K562 (cell line): ENCODE measurements at regions of chr2 and their contacts with region 1.

Region 1: DNA sequence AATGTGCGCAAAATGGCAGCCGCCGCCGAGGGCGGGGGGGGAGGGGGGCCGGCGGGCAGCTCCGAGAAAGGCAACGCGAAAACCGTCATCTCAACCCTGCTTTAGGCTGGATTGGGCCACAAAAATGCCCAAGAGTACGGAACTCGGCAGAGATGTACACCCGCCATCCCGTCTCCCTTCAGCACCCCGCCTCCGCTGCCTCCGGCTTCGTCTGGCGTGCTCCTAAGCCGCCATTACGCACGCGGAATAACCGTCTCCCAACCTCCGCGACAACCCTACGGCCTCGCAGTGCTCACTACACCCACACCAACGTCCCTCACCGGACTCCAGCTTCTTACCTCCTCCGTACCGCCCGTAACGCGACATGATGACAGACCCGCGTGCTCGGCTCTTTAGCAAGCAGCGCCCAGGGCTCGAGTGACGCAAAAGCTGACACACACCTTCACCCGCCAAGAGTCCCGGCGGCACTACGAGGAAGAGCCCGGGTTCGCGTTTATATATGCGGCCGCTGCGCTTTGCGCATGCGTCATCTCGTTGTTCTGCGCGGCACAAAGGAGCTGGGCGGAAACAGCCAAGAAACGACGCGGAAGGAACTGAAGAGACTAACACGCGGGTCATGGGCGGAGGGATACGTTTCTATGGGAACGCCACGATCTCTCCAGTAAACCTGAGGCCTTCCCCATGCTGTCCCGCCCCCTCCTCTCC is at the start of gene SRSF7:
- DNase-seq: peak; percentile 91 to 99 (median 95)
- ATAC-seq: peak; percentile 86
- H3K4me3 ChIP-seq: peak within 1 kb of the TSS; percentile 82
- H3K27ac ChIP-seq: peak within 1 kb of the TSS; percentile 99
- H3K4me1 ChIP-seq: peaks cover 0 to 29% of the 10 kb centered on the region in 2 experiments; a peak in 3 of 5 replicates
- H3K27me3 ChIP-seq: no peaks in the 10 kb centered on the region
- CTCF ChIP-seq: no peak
- EP300 ChIP-seq: peak; percentile 25
- POLR2A ChIP-seq: peak; percentile 100
- RAD21 ChIP-seq: peak in 1 of 2 experiments; percentile 16; a peak in 2 of 4 replicates
- polyA plus RNA-seq, gene SRSF7: 696 to 706 TPM

Region 2: GRCh38 chr2:37417321-37417720 is 1333.7 kb before region 1 on chr2:
- CTCF ChIA-PET with region 1: no interaction called
- POLR2A ChIA-PET with region 1: no interaction called
- in situ Hi-C with region 1: no loop called
- intact Hi-C with region 1: no loop called
- DNase-seq: no peak
- ATAC-seq: no peak
- H3K4me3 ChIP-seq: no peak overlapping the region
- H3K27ac ChIP-seq: no peak overlapping the region
- H3K4me1 ChIP-seq: peaks cover 3 to 15% of the 10 kb centered on the region in 2 experiments; a peak in 2 of 5 replicates
- H3K27me3 ChIP-seq: no peaks in the 10 kb centered on the region; a peak in 1 of 5 replicates
- CTCF ChIP-seq: no peak
- EP300 ChIP-seq: no peak
- POLR2A ChIP-seq: no peak
- RAD21 ChIP-seq: no peak

Region 3: DNA sequence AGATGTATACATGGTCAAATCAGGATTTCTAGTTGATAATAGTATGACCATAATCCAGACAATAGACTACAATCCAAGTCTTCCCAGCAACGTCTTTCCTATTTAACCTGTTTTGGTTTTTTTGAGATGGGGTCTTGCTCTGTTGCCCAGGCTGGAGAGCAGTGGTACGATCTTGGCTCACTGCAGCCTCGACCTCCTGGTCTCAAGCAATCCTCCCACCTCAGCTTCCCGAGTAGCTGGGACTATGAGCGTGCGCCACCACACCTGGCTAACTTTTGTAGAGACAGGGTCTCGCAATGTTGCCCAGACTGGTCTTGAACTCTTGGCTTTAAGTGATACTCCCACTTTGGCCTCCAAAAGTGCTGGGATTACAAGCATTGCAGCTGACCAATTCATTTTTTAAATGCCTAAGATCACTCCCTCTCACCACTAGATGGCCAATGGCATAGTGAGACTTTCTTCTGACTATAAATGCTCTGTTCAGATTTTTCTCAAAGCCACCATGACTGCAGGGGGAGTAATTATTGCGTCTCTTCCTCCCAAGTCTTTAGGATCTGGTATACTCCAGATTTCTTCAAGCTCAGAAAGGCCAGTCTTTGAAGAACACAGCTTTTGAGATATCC is 196.0 kb before region 1 on chr2:
- CTCF ChIA-PET with region 1: no interaction called
- POLR2A ChIA-PET with region 1: interaction called, 12 read pairs
- in situ Hi-C with region 1: no loop called
- intact Hi-C with region 1: no loop called
- DNase-seq: peak; percentile 22 to 47 (median 31)
- ATAC-seq: peak; percentile 64
- H3K4me3 ChIP-seq: no peak overlapping the region
- H3K27ac ChIP-seq: no peak overlapping the region
- H3K4me1 ChIP-seq: peaks cover 0 to 10% of the 10 kb centered on the region in 2 experiments; a peak in 4 of 5 replicates
- H3K27me3 ChIP-seq: no peaks in the 10 kb centered on the region
- CTCF ChIP-seq: peak; percentile 45 to 62 (median 56); a peak in 5 of 6 replicates
- EP300 ChIP-seq: no peak
- POLR2A ChIP-seq: 0 out of 2 replicates have a peak, but pooled peaks have one; percentile 50
- RAD21 ChIP-seq: peak; percentile 21 to 35; a peak in 2 of 4 replicates

Region 4: GRCh38 chr2:38665854-38666555 is 85.0 kb before region 1 on chr2 and contains the start of gene GALM:
- CTCF ChIA-PET with region 1: no interaction called
- POLR2A ChIA-PET with region 1: interaction called, 13 read pairs
- in situ Hi-C with region 1: no loop called
- intact Hi-C with region 1: no loop called
- DNase-seq: peak; percentile 80 to 89 (median 82)
- ATAC-seq: peak; percentile 91
- H3K4me3 ChIP-seq: peak within 1 kb of the TSS; percentile 64
- H3K27ac ChIP-seq: peak within 1 kb of the TSS; percentile 74
- H3K4me1 ChIP-seq: peaks cover 7 to 16% of the 10 kb centered on the region in 2 experiments; a peak in 4 of 5 replicates
- H3K27me3 ChIP-seq: no peaks in the 10 kb centered on the region
- CTCF ChIP-seq: no peak
- EP300 ChIP-seq: peak; percentile 62
- POLR2A ChIP-seq: peak; percentile 65
- RAD21 ChIP-seq: no peak
- polyA plus RNA-seq, gene GALM: 38.0 to 51.7 TPM

Region 5: GRCh38 chr2:38778687-38779082 is 27.6 kb after region 1 on chr2:
- CTCF ChIA-PET with region 1: no interaction called
- POLR2A ChIA-PET with region 1: interaction called, 24 read pairs
- in situ Hi-C with region 1: no loop called
- intact Hi-C with region 1: loop called (anchors 1 kb)
- DNase-seq: peak in 2 of 4 experiments; percentile 37 to 40
- ATAC-seq: no peak
- H3K4me3 ChIP-seq: peak overlapping the region; percentile 59
- H3K27ac ChIP-seq: peak overlapping the region; percentile 30; the same call in 1 of the 3 replicates
- H3K4me1 ChIP-seq: peaks cover 3 to 5% of the 10 kb centered on the region in 2 experiments; a peak in 3 of 5 replicates
- H3K27me3 ChIP-seq: no peaks in the 10 kb centered on the region
- CTCF ChIP-seq: no peak
- EP300 ChIP-seq: no peak
- POLR2A ChIP-seq: no peak
- RAD21 ChIP-seq: no peak

Region 6: DNA sequence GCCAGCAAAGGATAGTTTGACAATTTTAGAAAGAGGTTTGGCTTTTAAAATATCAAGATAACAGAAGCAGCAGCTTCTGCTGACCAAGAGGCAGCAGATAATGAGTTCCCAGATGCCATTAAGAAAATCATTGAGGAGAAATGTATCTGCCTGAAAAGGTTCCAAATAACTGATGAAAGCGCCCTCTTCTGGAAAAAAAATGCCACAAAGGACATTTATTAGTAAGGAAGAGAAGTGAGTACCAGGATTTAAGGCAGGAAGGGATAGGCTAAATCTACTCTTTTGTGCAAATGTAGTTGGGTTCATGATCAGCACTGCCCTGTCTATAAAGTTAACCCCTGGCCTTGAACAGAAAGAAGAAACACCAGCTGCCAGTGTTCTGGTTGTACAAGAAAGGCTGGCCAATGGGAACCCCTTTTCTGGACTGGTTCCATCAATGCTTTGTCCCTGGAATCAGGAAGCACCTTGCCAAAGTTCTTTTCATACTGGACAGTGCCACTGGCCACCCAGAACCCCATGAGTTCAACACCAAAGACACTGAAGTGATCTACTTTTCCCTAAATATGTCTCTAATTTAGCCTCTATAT is 84.1 kb after region 1 on chr2:
- CTCF ChIA-PET with region 1: no interaction called
- POLR2A ChIA-PET with region 1: interaction called, 16 read pairs
- in situ Hi-C with region 1: no loop called
- intact Hi-C with region 1: loop called (anchors 2 kb)
- DNase-seq: peak in 1 of 4 experiments; percentile 58
- ATAC-seq: peak; percentile 76
- H3K4me3 ChIP-seq: no peak overlapping the region
- H3K27ac ChIP-seq: no peak overlapping the region
- H3K4me1 ChIP-seq: no peaks in the 10 kb centered on the region
- H3K27me3 ChIP-seq: no peaks in the 10 kb centered on the region
- CTCF ChIP-seq: peak; percentile 33 to 59 (median 43); a peak in 4 of 6 replicates
- EP300 ChIP-seq: no peak
- POLR2A ChIP-seq: no peak
- RAD21 ChIP-seq: peak in 1 of 2 experiments; percentile 63; a peak in 2 of 4 replicates